HEK293 (cell line): ENCODE measurements at regions of chr19 and their contacts with region 1.

Region 1: DNA sequence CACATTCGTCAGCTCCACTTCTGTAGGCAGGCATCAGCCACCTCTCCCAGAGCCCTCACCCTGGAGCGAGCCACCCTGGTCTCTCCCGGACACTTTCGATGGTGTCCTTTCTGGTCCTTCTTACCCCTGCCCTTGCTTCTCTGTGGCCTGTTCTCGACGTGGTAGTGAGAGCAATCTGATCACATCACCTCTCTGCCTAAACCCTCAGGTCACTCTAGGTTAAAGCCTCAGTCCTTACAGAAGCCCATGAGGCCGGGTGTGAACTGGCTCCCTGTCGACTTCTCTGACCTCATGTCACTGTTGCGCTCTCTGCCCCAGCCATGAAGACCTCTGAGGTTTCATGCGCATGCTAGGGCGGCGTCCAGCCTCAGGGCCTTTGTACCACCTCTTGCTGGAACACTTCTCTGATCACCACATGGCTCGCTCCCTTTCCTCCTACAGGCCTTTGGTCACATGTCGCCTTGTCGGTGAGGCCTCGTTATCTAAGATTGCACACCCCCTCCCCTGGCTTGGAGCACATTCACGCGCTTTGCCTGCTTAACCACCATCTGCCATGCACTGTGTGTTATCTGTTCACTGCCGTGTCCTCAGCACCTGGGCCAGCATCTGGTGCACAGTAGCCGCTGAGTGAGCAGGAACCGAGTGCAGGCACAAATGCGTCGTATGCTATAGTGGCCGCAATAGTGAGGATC is 101.5 kb downstream of the DPF1 start:
- H3K4me3 ChIP-seq: no peak overlapping the region
- H3K27ac ChIP-seq: no peak overlapping the region
- H3K4me1 ChIP-seq: no peaks in the 10 kb centered on the region
- CTCF ChIP-seq: no peak

Region 2: GRCh38 chr19:38062959-38063761 is 59.4 kb before region 1 on chr19:
- CTCF ChIA-PET with region 1: no interaction called
- POLR2A ChIA-PET with region 1: no interaction called
- H3K4me3 ChIP-seq: no peak overlapping the region
- H3K27ac ChIP-seq: peak overlapping the region; percentile 41
- H3K4me1 ChIP-seq: no peaks in the 10 kb centered on the region; the same call in none of the 2 replicates
- CTCF ChIP-seq: no peak

Region 3: DNA sequence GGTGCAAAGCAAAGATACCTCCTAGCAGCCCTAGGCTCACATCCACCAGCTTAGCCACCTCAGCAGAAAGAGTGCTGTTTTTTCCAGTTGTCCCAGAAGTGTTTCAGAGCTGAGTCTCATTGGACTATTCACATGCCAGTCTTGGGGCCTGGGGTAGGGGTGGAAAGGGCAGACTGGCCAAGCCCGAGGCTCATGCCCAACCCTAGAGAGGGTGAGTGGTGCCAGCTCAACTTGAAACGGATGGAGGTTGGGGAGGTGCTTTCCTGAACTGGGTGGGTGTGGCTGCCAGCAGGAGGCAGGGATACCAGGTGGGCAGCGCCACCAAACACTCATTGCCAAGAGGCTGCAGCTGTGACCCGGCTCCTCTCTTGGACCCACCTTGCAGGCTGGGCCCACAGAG is 15.4 kb before region 1 on chr19:
- CTCF ChIA-PET with region 1: interaction called, 13 read pairs
- POLR2A ChIA-PET with region 1: no interaction called
- H3K4me3 ChIP-seq: no peak overlapping the region
- H3K27ac ChIP-seq: no peak overlapping the region
- H3K4me1 ChIP-seq: no peaks in the 10 kb centered on the region
- CTCF ChIP-seq: no peak

Region 4: GRCh38 chr19:38172001-38172400 is 49.5 kb after region 1 on chr19:
- CTCF ChIA-PET with region 1: no interaction called
- POLR2A ChIA-PET with region 1: no interaction called
- H3K4me3 ChIP-seq: no peak overlapping the region
- H3K27ac ChIP-seq: no peak overlapping the region
- H3K4me1 ChIP-seq: no peaks in the 10 kb centered on the region
- CTCF ChIP-seq: no peak

Region 5: GRCh38 chr19:38417544-38418506 is 295.3 kb after region 1 on chr19:
- CTCF ChIA-PET with region 1: no interaction called
- POLR2A ChIA-PET with region 1: no interaction called
- H3K4me3 ChIP-seq: peak overlapping the region; percentile 21
- H3K27ac ChIP-seq: no peak overlapping the region; the same call in 1 of the 2 replicates
- H3K4me1 ChIP-seq: peaks cover 11% of the 10 kb centered on the region
- CTCF ChIP-seq: no peak; the same call in 1 of the 2 replicates

Region 6: GRCh38 chr19:38470788-38471480 is 348.4 kb after region 1 on chr19:
- CTCF ChIA-PET with region 1: no interaction called
- POLR2A ChIA-PET with region 1: no interaction called
- H3K4me3 ChIP-seq: no peak overlapping the region
- H3K27ac ChIP-seq: no peak overlapping the region
- H3K4me1 ChIP-seq: no peaks in the 10 kb centered on the region
- CTCF ChIP-seq: no peak